Heart left ventricle (tissue), 16 donors: ENCODE measurements at regions of chr3 and their contacts with region 1.

Region 1: DNA sequence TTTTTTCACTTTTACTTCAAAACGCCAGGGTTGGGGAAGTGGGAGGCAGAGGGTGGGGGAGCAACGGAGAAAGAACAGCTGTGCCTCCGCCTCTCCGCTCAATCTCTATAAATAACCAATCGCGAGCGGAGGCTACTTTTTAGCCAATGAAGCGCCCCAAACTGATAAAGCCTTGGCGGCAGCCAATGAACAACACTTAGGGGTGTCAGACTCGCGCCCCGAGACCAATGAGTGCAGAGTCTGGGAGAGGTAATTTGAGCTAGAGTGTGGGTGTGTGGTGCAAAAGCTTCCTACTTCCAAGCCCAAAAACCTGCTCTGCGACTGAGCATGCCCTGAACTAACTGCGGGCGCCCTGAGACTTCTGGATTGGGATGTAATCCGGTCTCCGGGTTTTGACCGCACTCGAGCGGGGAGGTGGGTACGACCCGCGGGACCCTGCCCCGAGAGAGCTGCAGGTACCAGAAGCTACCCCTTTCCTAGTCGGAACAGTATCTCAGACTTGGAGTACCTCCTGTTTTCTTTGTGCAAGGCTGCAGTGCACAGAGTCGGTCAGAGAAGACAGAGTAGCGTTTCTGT is 800 bp upstream of the RAP2B start:
- DNase-seq: peak; percentile 93 to 97 (median 96)
- ATAC-seq: peak; percentile 92 to 97 (median 94)
- H3K4me3 ChIP-seq: peak overlapping the region; percentile 44 to 98 (median 82)
- H3K27ac ChIP-seq: peak overlapping the region; percentile 57 to 98 (median 88)
- H3K4me1 ChIP-seq: peaks cover 0 to 33% (median 19%) of the 10 kb centered on the region in 12 donors
- H3K27me3 ChIP-seq: no peaks in the 10 kb centered on the region
- CTCF ChIP-seq: no peak
- POLR2A ChIP-seq: peak in 1 of 2 donors; percentile 71

Region 2: DNA sequence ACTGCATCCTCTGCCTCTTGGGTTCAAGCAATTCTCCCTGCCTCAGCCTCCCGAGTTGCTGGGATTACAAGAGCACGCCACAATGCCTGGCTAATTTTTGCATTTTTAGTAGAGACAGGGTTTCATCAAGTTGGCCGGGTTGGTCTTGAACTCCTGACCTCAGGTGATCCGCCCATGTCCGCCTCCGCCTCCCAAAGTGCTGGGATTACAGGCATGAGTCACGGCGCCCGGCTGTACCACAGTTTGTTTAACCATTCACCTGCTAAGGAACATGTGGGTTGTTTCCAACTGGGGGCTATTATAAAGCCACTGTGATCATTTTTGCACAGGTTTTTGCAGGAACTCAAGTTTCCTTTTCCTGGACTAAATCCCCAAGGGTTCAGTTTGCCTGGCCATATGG is 122.4 kb before region 1 on chr3:
- intact Hi-C with region 1: loop called in 5 of 10 experiments (anchors 2 to 10 kb)
- DNase-seq: peak in 3 of 5 donors; percentile 16 to 41 (median 37)
- ATAC-seq: peak in 1 of 4 donors; percentile 68
- H3K4me3 ChIP-seq: no peak overlapping the region
- H3K27ac ChIP-seq: peak overlapping the region in 1 of 12 donors; percentile 14
- H3K4me1 ChIP-seq: peaks cover 0 to 8% (median 0%) of the 10 kb centered on the region in 12 donors
- H3K27me3 ChIP-seq: no peaks in the 10 kb centered on the region
- CTCF ChIP-seq: no peak
- POLR2A ChIP-seq: no peak

Region 3: GRCh38 chr3:153052096-153052460 is 109.1 kb before region 1 on chr3:
- intact Hi-C with region 1: loop called in 7 of 10 experiments (anchors 5 to 10 kb)
- DNase-seq: peak in 2 of 5 donors; percentile 23 to 54
- ATAC-seq: peak in 3 of 4 donors; percentile 86 to 99 (median 94)
- H3K4me3 ChIP-seq: no peak overlapping the region
- H3K27ac ChIP-seq: peak overlapping the region in 3 of 12 donors; percentile 8 to 59 (median 27)
- H3K4me1 ChIP-seq: peaks cover 0 to 20% (median 0%) of the 10 kb centered on the region in 12 donors
- H3K27me3 ChIP-seq: no peaks in the 10 kb centered on the region
- CTCF ChIP-seq: no peak
- POLR2A ChIP-seq: no peak

Region 4: GRCh38 chr3:153127788-153128187 is 33.4 kb before region 1 on chr3:
- intact Hi-C with region 1: no loop called
- DNase-seq: no peak
- ATAC-seq: no peak
- H3K4me3 ChIP-seq: no peak overlapping the region
- H3K27ac ChIP-seq: no peak overlapping the region
- H3K4me1 ChIP-seq: peaks cover 0 to 25% (median 0%) of the 10 kb centered on the region in 12 donors
- H3K27me3 ChIP-seq: no peaks in the 10 kb centered on the region
- CTCF ChIP-seq: no peak
- POLR2A ChIP-seq: no peak

Region 5: DNA sequence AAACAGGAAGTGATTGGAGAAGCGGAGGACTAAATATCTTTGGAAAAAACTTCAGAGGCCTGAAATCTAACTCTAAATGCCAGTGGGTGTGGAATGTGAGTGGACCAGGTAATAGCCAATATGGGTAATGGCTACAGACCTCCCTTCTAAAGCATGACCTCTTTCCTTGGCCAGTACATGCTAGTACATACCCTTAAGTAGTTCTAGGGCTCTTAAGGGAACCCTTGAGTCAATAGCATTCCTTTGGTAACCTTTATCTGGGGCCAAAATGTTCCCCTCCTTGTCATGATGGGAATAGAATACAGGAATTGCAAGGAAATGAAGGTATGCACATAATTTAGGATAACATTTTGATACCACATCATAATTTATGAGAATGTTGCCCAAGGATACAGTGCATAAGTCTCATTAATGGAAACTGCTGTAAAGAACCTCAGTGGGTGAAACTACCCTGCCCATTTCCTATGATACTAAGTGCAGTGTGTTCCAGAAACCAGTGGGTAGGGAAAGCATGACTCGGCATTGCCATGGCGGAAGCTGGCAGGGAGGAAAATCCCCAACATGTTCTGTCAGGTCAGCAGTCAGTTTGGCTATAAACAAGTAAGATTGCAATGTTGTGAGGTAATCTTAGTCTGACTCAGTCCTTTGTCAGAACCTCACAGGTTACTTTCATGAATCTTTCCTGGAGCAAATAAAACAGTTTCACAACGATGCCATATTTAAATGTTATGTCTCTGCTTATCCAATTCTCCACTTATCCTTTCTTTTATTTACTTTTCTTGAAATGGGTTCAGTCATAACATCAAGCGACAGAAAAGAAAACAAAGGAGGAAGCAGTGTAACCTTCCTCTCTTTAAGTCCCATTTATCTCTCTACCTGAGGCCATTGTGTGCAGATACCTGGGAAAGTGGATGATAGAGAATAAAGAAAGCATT is 22.7 kb before region 1 on chr3:
- intact Hi-C with region 1: no loop called
- DNase-seq: peak in 4 of 5 donors; percentile 27 to 57 (median 34)
- ATAC-seq: peak; percentile 51 to 75 (median 60)
- H3K4me3 ChIP-seq: no peak overlapping the region
- H3K27ac ChIP-seq: peak overlapping the region in 1 of 12 donors; percentile 72
- H3K4me1 ChIP-seq: peaks cover 0 to 23% (median 0%) of the 10 kb centered on the region in 12 donors
- H3K27me3 ChIP-seq: no peaks in the 10 kb centered on the region
- CTCF ChIP-seq: no peak
- POLR2A ChIP-seq: no peak

Region 6: GRCh38 chr3:153284282-153284938 is 123.2 kb after region 1 on chr3:
- intact Hi-C with region 1: loop called in 7 of 10 experiments (anchors 2 to 10 kb)
- DNase-seq: peak in 4 of 5 donors; percentile 42 to 72 (median 50)
- ATAC-seq: peak; percentile 75 to 94 (median 90)
- H3K4me3 ChIP-seq: no peak overlapping the region
- H3K27ac ChIP-seq: peak overlapping the region in 8 of 12 donors; percentile 1 to 84 (median 29)
- H3K4me1 ChIP-seq: peaks cover 0 to 45% (median 15%) of the 10 kb centered on the region in 12 donors
- H3K27me3 ChIP-seq: no peaks in the 10 kb centered on the region
- CTCF ChIP-seq: no peak
- POLR2A ChIP-seq: no peak

Region 7: GRCh38 chr3:153595186-153595815 is 434.1 kb after region 1 on chr3:
- intact Hi-C with region 1: loop called in 4 of 10 experiments (anchors 5 kb)
- DNase-seq: no peak
- ATAC-seq: peak in 3 of 4 donors; percentile 53 to 77 (median 65)
- H3K4me3 ChIP-seq: no peak overlapping the region
- H3K27ac ChIP-seq: no peak overlapping the region
- H3K4me1 ChIP-seq: peaks cover 0 to 11% (median 0%) of the 10 kb centered on the region in 12 donors
- H3K27me3 ChIP-seq: no peaks in the 10 kb centered on the region
- CTCF ChIP-seq: peak; percentile 34 to 67 (median 56)
- POLR2A ChIP-seq: no peak